ENCODE measurements at regions of chr9 and their contacts with region 1.

Region 1: DNA sequence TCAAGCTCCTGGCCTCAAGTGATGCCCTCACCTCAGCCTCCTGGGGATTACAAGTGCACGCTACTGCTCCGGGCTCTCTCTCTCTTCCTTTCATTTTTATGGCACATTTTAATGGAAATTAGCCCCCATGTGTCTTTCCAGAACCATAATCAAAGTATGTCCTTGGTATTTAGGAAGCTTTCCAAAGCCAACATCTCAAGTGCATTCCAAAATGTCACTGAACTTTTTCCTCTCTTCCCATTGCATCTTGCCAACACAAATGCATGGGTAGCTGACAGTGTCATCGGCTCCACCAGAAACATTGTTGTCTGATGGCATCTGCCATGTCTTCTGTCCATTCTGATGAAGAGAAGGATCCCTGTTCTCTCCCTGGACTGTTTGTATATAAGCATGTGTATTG is 90.5 kb upstream of the ANXA1 start:
- DNase-seq: no peak
- H3K4me3 ChIP-seq: no peak overlapping the region
- H3K27me3 ChIP-seq: no peaks in the 10 kb centered on the region
- CTCF ChIP-seq: no peak

Region 2: DNA sequence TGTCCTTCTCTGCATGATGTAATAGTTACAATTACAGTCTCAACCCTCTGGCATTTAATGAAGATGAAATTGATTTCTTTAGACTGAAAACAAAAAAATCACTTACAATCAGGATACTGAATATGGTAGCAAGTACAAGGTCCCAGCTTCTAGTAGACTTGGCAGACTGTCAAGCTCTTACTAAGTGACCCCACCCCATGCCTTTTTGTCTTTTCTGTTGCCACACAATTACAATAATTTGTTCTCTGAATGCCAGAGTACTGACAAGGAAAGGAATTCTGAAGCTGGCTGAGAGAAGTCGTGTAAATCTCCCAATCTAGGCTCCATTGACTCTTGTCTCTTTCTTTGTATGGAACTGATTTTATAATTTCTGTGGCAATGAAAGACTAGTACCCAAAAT is 385.6 kb before region 1 on chr9:
- CTCF ChIA-PET with region 1: no interaction called
- POLR2A ChIA-PET with region 1: no interaction called
- DNase-seq: no peak
- H3K4me3 ChIP-seq: no peak overlapping the region
- H3K27me3 ChIP-seq: no peaks in the 10 kb centered on the region
- CTCF ChIP-seq: no peak

Region 3: DNA sequence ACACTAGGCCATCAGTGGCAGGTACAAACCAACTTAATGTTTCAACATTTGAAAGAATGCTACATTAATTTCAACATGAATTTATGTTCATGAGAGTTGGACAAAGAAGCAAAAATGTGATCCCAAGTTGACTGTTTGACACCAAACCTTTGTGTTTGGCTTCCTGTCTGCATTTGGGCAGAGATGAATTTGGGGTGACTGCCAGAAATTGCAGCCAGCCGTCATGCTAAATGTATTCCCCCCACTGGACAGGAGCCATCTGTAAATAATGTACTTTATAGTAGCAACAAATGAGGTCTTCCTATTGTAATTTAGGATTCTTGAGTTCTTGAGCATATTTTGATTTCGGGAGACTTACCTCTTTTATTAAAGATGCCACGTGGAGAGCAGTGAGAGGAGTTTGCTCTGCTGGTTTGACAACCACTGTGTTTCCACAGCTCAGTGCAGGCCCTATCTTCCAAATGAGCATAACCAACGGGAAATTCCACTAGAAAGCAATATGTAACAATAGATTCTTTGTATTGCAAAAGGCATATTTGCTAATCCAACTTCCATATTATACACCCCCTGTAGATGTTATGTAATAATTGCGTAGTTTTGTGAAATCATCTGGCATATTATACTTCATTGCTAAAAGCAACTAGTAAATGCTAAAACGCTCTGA is 135.9 kb before region 1 on chr9:
- CTCF ChIA-PET with region 1: no interaction called
- POLR2A ChIA-PET with region 1: no interaction called
- DNase-seq: no peak
- H3K4me3 ChIP-seq: no peak overlapping the region
- H3K27me3 ChIP-seq: no peaks in the 10 kb centered on the region
- CTCF ChIP-seq: no peak

Region 4: GRCh38 chr9:73050065-73050816 is 10.9 kb before region 1 on chr9:
- CTCF ChIA-PET with region 1: interaction called, 8 read pairs
- POLR2A ChIA-PET with region 1: interaction called, 11 read pairs
- DNase-seq: peak; percentile 93
- H3K4me3 ChIP-seq: no peak overlapping the region
- H3K27me3 ChIP-seq: no peaks in the 10 kb centered on the region
- CTCF ChIP-seq: peak; percentile 52

Region 5: DNA sequence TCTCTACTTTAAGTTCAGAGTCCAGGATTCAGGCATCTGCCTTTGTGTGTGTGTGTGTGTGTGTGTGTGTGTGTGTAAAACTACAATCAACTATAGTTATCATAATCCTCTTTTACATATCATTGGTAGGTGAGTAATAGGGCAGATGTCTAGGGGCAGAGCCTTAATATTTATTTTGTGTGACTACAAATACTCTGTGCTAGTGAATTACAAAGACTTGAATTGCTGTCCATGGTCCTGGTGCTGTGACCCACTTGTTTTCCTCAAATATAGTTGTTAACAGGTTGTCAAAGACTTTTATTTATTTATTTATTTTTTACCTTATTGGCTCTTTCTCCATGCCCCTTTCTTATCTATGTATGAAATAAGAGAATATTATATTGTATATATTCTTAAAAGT is 287.3 kb after region 1 on chr9:
- CTCF ChIA-PET with region 1: no interaction called
- POLR2A ChIA-PET with region 1: no interaction called
- DNase-seq: no peak
- H3K4me3 ChIP-seq: no peak overlapping the region
- H3K27me3 ChIP-seq: no peaks in the 10 kb centered on the region
- CTCF ChIP-seq: no peak

Measured in BJ (cell line).